H1 (cell line): ENCODE measurements at regions of chr11 and their contacts with region 1.

Region 1: DNA sequence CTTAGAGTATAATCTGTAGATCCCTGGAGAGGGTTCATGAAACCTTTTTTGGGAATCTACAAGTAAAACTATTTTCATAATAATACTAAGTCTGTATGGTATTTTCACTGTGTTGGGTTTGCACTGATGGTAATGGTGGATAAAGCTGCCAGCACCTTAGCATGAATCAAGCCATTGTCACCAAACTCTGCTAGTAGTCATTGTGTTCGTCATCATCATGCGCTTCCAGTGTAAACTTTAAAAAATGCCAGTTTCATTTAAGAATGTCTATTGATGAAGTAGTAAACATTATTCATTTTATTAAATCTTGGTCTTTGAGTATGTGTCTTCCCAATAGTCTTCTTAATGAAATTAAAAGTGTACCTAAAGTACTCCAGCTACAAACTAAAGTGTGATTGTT is 15.0 kb downstream of the ALKBH3 start:
- DNase-seq: no peak
- H3K4me3 ChIP-seq: no peak overlapping the region
- H3K27ac ChIP-seq: no peak overlapping the region
- H3K4me1 ChIP-seq: no peaks in the 10 kb centered on the region
- H3K27me3 ChIP-seq: no peaks in the 10 kb centered on the region
- CTCF ChIP-seq: no peak
- EP300 ChIP-seq: no peak
- POLR2A ChIP-seq: no peak
- RAD21 ChIP-seq: no peak

Region 2: DNA sequence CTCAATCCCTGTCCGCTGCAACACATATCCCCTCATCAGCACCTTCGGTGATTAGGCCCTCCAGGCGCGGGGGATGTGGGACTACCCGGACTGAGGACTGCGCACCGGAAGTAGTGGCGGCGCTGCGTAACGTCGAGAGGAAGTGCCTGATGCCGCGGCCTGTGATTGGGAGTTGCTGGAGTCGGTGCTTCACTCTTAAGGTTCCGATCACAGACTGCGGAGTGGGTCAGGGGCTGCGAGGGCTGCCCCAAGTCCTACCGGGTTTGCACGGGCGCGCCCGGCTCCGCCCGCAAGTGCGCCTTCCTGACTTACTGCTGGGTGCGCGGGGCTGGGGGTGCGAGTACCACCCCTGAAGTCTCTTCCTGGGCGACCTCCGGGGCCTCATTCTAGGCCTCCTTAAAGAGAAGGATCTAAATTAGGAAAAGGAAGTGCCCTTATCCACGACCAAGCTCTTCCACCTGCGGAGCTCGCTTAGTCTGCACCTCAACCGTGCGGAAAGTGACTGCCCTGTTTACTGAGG is 14.9 kb before region 1 on chr11 and contains the start of gene ALKBH3:
- CTCF ChIA-PET with region 1: interaction called, 37 read pairs
- POLR2A ChIA-PET with region 1: no interaction called
- DNase-seq: peak; percentile 83 to 87
- H3K4me3 ChIP-seq: peak within 1 kb of the TSS; percentile 57 to 72 (median 70)
- H3K27ac ChIP-seq: no peak within 1 kb of the TSS
- H3K4me1 ChIP-seq: no peaks in the 10 kb centered on the region
- H3K27me3 ChIP-seq: peaks cover 0 to 7% (median 3%) of the 10 kb centered on the region in 4 experiments; a peak in 2 of 7 replicates
- CTCF ChIP-seq: no peak
- EP300 ChIP-seq: no peak
- POLR2A ChIP-seq: peak in 1 of 2 experiments; percentile 19; a peak in 1 of 3 replicates
- RAD21 ChIP-seq: no peak
- total RNA-seq, gene ALKBH3: 11.4 and 12.7 TPM in 2 replicates

Region 3: GRCh38 chr11:43920598-43921419 is 25.2 kb after region 1 on chr11:
- CTCF ChIA-PET with region 1: interaction called, 18 read pairs
- POLR2A ChIA-PET with region 1: no interaction called
- DNase-seq: no peak
- H3K4me3 ChIP-seq: no peak overlapping the region
- H3K27ac ChIP-seq: no peak overlapping the region
- H3K4me1 ChIP-seq: peaks cover 2 to 22% (median 11%) of the 10 kb centered on the region in 4 experiments; a peak in 6 of 7 replicates
- H3K27me3 ChIP-seq: no peaks in the 10 kb centered on the region
- CTCF ChIP-seq: no peak
- EP300 ChIP-seq: no peak
- POLR2A ChIP-seq: no peak
- RAD21 ChIP-seq: no peak

Region 4: GRCh38 chr11:44029977-44030911 is 134.6 kb after region 1 on chr11:
- CTCF ChIA-PET with region 1: interaction called, 16 read pairs
- POLR2A ChIA-PET with region 1: no interaction called
- DNase-seq: peak in 1 of 2 experiments; percentile 45
- H3K4me3 ChIP-seq: peak overlapping the region in 1 of 4 experiments; percentile 31; a peak in 1 of 8 replicates
- H3K27ac ChIP-seq: no peak overlapping the region
- H3K4me1 ChIP-seq: peaks cover 0 to 11% (median 4%) of the 10 kb centered on the region in 4 experiments; a peak in 6 of 7 replicates
- H3K27me3 ChIP-seq: no peaks in the 10 kb centered on the region
- CTCF ChIP-seq: no peak
- EP300 ChIP-seq: no peak
- POLR2A ChIP-seq: no peak
- RAD21 ChIP-seq: 0 out of 4 replicates have a peak, but pooled peaks of 1 of the 2 experiments have one; percentile 3

Region 5: DNA sequence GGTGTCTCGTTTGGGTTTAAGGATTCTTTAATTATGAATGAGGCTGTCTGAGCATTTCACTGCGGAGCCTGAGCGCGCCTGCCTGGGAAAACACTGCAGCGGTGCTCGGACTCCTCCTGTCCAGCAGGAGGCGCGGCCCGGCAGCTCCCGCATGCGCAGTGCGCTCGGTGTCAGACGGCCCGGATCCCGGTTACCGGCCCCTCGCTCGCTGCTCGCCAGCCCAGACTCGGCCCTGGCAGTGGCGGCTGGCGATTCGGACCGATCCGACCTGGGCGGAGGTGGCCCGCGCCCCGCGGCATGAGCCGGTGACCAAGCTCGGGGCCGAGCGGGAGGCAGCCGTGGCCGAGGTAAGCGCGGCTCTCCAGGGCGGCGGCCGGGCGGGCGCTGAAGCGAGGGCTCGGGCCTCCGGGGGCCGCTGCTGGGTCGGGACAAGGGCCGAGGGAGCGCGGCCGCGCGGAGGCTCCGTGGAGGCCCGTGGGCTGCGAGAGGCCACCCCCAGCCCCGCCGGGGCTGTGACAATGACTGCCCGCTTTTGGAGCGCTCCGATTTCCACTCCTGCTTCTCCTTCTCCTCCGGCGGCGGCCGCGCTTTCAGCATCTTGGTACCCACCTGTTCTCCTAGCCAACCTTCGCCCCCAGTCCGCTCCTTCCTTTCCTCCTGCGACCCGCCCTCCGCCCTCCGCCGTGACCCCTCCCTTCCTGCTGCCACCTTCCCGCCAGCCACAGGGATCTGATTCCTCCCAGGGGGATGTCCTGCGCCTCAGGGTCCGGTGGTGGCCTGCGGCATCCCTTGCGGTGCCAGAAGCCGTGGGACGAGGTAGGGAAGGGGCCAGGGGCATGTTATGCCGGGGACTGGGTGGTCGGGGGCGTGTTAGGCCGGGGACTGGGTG is 200.1 kb after region 1 on chr11 and contains the start of gene EXT2:
- CTCF ChIA-PET with region 1: interaction called, 11 read pairs
- POLR2A ChIA-PET with region 1: no interaction called
- DNase-seq: peak in 1 of 2 experiments; percentile 94
- H3K4me3 ChIP-seq: peak within 1 kb of the TSS; percentile 64 to 88 (median 70)
- H3K27ac ChIP-seq: no peak within 1 kb of the TSS
- H3K4me1 ChIP-seq: peaks cover 0 to 1% (median 0%) of the 10 kb centered on the region in 4 experiments; a peak in 1 of 7 replicates
- H3K27me3 ChIP-seq: no peaks in the 10 kb centered on the region
- CTCF ChIP-seq: peak; percentile 83 to 90 (median 86)
- EP300 ChIP-seq: no peak
- POLR2A ChIP-seq: no peak
- RAD21 ChIP-seq: peak in 1 of 2 experiments; percentile 31; a peak in 1 of 4 replicates
- total RNA-seq, gene EXT2: 38.9 and 42.8 TPM in 2 replicates